Mammary epithelial cell (primary cell): ENCODE measurements at regions of chr11 and their contacts with region 1.

Region 1: GRCh38 chr11:7612661-7613393 is 60.5 kb downstream of the CYB5R2 start:
- DNase-seq: peak; percentile 69
- H3K4me3 ChIP-seq: no peak overlapping the region
- H3K27ac ChIP-seq: no peak overlapping the region
- H3K4me1 ChIP-seq: peaks cover 22% of the 10 kb centered on the region
- H3K27me3 ChIP-seq: no peaks in the 10 kb centered on the region
- CTCF ChIP-seq: no peak

Region 2: DNA sequence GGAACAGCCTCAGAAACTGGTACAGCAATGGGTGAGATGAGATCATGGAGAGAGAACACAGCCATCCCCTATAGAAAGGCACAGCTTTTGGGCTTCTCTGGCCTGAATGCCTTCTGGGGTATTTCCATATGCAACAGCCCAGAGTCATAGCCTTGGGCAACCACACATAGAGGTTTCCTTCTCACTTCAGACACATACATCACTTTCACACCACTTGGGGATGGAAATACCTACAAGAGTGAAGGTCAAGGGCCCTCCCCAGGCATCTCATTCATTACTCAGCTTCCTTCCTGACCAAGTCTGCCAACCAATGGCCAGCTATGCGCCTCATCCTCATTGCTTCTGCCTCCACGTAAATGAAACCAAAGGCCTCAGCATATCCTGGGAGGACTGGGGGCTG is 145.2 kb before region 1 on chr11:
- CTCF ChIA-PET with region 1: no interaction called
- dilution Hi-C with region 1: no loop called
- in situ Hi-C with region 1: no loop called
- intact Hi-C with region 1: no loop called
- DNase-seq: no peak
- H3K4me3 ChIP-seq: no peak overlapping the region
- H3K27ac ChIP-seq: no peak overlapping the region
- H3K4me1 ChIP-seq: no peaks in the 10 kb centered on the region
- H3K27me3 ChIP-seq: no peaks in the 10 kb centered on the region
- CTCF ChIP-seq: no peak

Region 3: DNA sequence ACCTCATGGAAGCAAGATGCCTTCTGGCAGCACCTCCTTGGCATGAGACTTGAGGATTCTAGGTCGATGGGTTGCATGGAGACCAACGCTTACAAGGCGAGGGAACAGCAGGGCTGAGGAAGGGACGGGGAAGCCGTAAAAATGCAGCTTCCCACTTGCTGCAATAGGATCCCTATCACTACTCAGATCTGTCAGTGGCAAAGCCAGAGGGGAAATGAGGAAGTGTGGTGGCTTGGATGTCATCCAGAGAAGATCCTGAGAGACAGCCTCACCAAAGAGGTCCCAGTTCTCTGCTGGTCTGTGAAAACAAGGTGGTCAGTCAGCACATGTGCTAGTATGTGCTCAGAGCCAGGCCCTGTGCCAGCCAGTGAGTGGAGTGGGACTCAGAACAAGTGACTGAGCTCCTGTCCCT is 38.3 kb after region 1 on chr11:
- CTCF ChIA-PET with region 1: no interaction called
- dilution Hi-C with region 1: no loop called
- in situ Hi-C with region 1: no loop called
- intact Hi-C with region 1: loop called (anchors 5 kb)
- DNase-seq: no peak
- H3K4me3 ChIP-seq: no peak overlapping the region
- H3K27ac ChIP-seq: no peak overlapping the region
- H3K4me1 ChIP-seq: no peaks in the 10 kb centered on the region
- H3K27me3 ChIP-seq: no peaks in the 10 kb centered on the region
- CTCF ChIP-seq: no peak